ENCODE measurements at regions of chr6 and their contacts with region 1.

Region 1: GRCh38 chr6:163427498-163428254 is 13.2 kb downstream of the QKI start:
- DNase-seq: no peak

Region 2: GRCh38 chr6:163243083-163243482 is 184.6 kb before region 1 on chr6:
- intact Hi-C with region 1: no loop called
- DNase-seq: peak; percentile 79 to 97 (median 91)

Region 3: GRCh38 chr6:163474581-163474980 is 46.9 kb after region 1 on chr6:
- intact Hi-C with region 1: no loop called
- DNase-seq: no peak

Region 4: DNA sequence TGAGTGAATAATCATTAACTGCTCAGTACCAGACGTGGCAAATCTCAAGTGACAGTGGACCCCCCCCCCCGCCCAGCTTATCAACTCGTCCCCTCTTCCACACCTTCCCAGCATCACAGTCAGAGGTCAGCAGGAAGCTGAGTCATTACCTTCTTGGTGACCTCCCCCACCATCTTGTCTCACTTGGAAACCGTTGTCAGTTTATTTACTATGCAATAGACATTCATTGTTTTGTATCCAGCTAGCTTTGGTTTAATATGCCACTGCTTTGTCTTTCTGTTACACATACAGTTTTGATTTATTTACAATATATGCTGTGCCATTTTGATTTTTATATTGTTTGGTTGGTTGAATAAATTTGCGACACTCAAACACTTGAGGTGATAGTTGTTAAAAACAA is 144.9 kb after region 1 on chr6:
- intact Hi-C with region 1: loop called (anchors 5 kb)
- DNase-seq: no peak

Region 5: DNA sequence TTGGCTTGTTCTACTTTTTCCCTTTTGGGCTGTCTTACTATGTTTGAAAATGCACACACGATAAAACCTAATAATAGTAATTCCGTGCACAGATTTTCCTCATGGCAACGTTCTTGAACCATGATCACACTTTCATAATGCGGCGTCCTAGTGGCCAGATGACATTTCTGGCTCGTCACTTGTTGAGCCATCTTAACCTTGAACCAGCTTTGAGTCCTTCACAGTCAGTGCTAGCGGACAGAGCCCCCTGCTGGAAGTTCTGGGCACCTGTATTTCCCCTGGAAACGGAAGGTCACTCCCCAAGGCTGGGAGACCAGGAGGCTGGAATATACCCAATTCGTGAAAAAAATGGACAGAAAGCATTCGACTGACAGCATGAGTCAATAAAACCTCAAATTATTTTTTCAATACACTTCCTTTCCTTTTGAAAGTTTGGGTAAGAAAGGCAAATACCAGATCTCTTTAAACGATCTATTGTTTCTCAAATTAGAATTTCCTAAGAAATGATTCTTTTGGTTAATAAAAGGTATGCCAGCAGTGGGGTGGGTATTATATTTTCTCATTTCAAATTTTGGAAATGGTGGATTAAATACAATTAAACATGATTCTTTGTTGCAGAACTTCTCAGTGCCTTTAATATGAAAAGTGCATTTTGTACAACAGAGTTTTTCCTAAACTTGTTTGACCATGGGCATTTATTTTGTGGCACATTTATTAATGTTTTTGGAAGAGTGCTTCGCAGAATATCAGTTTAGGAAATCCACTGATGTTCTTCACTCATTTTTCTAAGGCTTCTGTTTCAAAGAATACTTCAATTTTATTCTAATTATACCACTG is 529.1 kb after region 1 on chr6:
- intact Hi-C with region 1: loop called (anchors 10 kb)
- DNase-seq: peak in 41 of 42 donors; percentile 50 to 93 (median 79)

Measured in head of caudate nucleus (tissue), 42 donors.